ENCODE measurements at regions of chr10 and their contacts with region 1.

Region 1: GRCh38 chr10:90969947-90970684 is 49.2 kb upstream of the ANKRD1 start:
- DNase-seq: peak in 1 of 2 experiments; percentile 48
- H3K4me3 ChIP-seq: no peak overlapping the region
- H3K27ac ChIP-seq: no peak overlapping the region
- H3K4me1 ChIP-seq: no peaks in the 10 kb centered on the region
- H3K27me3 ChIP-seq: peaks cover 0 to 16% (median 7%) of the 10 kb centered on the region in 4 experiments; a peak in 5 of 7 replicates
- CTCF ChIP-seq: peak in 2 of 3 experiments; percentile 30; a peak in 3 of 4 replicates
- EP300 ChIP-seq: no peak
- POLR2A ChIP-seq: no peak
- RAD21 ChIP-seq: peak; percentile 47 to 59; a peak in 3 of 4 replicates

Region 2: GRCh38 chr10:90920986-90921666 is 49.0 kb before region 1 on chr10 and contains the start of gene ANKRD1:
- CTCF ChIA-PET with region 1: interaction called, 12 read pairs
- POLR2A ChIA-PET with region 1: interaction called, 3 read pairs
- DNase-seq: peak in 1 of 2 experiments; percentile 67
- H3K4me3 ChIP-seq: no peak within 1 kb of the TSS
- H3K27ac ChIP-seq: no peak within 1 kb of the TSS
- H3K4me1 ChIP-seq: peaks cover 0 to 3% (median 2%) of the 10 kb centered on the region in 4 experiments; a peak in 3 of 7 replicates
- H3K27me3 ChIP-seq: peaks cover 88 to 98% (median 97%) of the 10 kb centered on the region in 4 experiments
- CTCF ChIP-seq: no peak
- EP300 ChIP-seq: no peak
- POLR2A ChIP-seq: no peak
- RAD21 ChIP-seq: no peak
- total RNA-seq, gene ANKRD1: not detected in 2 replicates

Region 3: DNA sequence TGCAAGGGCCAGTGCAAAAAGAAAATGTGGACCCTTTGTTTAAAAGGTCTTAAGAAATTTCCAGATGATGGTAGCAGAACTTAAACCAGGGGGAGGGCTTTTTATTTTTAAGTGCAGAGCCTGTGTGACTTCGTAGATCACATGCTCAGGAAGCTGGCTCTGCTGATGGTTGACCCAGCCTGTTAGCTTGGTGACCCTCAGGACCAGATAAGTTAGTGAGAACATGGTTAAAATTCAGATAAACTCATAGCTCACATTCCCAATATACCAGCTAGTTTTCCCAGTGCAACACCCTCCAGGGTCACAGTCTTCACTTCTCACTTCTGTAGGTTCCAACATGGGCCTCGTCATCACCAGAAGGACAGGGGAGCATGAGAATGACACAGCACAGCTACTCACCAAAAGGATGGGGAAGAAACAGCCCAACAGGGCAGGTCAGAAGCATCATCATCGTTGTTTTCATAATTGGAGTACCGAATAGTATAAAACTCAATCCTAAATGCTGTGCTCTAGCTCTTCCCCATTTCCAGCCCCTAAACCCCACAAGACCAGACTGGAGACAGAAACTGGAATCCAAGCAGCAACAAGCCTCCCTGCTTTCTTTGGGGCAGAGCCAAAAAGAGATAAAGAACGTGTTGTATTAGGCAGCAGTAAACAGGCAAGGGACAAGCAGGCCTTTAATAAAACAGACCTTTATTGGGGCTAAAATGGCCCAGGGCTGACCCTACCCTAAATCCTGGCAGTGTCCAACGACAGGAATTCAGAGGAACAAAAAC is 53.0 kb after region 1 on chr10:
- CTCF ChIA-PET with region 1: no interaction called
- POLR2A ChIA-PET with region 1: no interaction called
- DNase-seq: no peak
- H3K4me3 ChIP-seq: no peak overlapping the region
- H3K27ac ChIP-seq: no peak overlapping the region
- H3K4me1 ChIP-seq: no peaks in the 10 kb centered on the region
- H3K27me3 ChIP-seq: no peaks in the 10 kb centered on the region
- CTCF ChIP-seq: no peak
- EP300 ChIP-seq: no peak
- POLR2A ChIP-seq: no peak
- RAD21 ChIP-seq: no peak

Region 4: GRCh38 chr10:91104193-91105041 is 134.3 kb after region 1 on chr10:
- CTCF ChIA-PET with region 1: no interaction called
- POLR2A ChIA-PET with region 1: no interaction called
- DNase-seq: no peak
- H3K4me3 ChIP-seq: no peak overlapping the region
- H3K27ac ChIP-seq: no peak overlapping the region
- H3K4me1 ChIP-seq: no peaks in the 10 kb centered on the region
- H3K27me3 ChIP-seq: no peaks in the 10 kb centered on the region
- CTCF ChIP-seq: no peak
- EP300 ChIP-seq: no peak
- POLR2A ChIP-seq: no peak
- RAD21 ChIP-seq: no peak

Measured in H1 (cell line).